Activated CD8-positive, alpha-beta T cell treated with anti-CD3 and anti-CD28 coated beads, Interleukin-2, amount 10 ng/mL, durations not matched to agents 7 days and 5 days (primary cell): ENCODE measurements at regions of chr12 and their contacts with region 1.

Region 1: DNA sequence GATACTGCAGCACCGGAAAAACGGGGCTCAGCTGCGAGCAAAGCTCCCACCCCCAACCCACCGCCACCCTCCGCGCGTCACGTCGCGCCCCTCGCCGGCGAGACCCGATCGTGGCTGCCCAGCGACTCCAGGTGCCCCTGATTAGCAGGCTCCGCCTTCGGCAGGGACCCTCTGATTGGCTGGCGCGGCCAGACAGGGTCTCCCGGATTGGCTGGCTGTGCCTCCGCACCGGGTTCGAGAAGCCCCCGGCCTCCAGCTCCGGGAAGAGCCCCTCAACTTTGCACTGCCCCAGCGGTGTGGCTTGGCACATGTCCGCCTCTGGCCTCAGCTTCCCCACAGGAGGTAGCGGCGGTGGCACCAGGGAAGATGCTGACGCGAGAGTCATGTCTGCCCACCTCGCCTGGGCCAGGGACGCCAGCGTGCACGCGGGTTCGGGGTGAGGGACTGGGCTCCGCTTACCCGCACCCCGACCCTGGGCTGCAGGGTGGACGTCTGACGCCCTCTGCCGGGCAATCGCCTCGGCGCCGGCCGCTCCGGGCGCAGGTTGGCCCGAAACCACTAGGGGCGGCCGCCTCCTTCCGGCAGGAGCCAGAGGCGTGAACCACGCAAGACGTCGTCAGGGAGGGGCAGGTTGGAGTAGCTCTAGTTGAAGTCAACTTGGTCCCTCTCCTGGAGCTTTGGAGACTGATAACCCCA is 498 bp upstream of the RHOF start:
- DNase-seq: peak; percentile 96
- ATAC-seq: peak; percentile 64
- H3K4me3 Mint-ChIP-seq: peak overlapping the region; percentile 94
- H3K27ac Mint-ChIP-seq: peak overlapping the region; percentile 95
- H3K4me1 Mint-ChIP-seq: peaks cover 60% of the 10 kb centered on the region
- H3K27me3 Mint-ChIP-seq: no peaks in the 10 kb centered on the region

Region 2: DNA sequence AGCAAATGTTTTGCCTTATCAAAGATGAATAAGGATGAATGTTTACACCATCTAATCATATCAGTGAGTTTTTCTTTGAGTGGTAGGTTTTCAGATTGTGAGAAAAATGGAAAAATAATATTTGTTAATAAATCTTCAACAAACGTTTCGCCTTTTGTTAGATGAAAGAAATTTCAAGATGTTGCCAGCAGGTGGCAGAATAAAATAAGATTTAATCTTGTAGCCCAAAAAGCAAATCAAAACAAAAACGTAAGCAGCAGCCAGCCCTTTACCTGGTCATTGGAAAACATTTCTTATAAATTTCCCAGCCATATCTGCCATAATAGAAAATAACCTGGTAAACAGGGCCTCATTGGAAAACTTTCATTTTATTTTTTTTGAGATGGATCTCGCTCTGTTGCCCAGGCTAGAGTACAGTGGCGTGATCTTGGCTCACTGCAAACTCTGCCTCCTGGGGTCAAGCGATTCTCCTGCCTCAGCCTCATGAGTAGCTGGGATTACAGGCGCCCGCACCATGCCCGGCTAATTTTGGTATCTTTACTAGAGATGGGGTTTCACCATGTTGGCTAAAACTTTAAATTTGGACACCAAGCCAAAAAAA is 96.8 kb before region 1 on chr12:
- CTCF ChIA-PET with region 1: interaction called, 36 read pairs
- POLR2A ChIA-PET with region 1: no interaction called
- DNase-seq: peak; percentile 62
- ATAC-seq: no peak
- H3K4me3 Mint-ChIP-seq: no peak overlapping the region
- H3K27ac Mint-ChIP-seq: no peak overlapping the region
- H3K4me1 Mint-ChIP-seq: peaks cover 4% of the 10 kb centered on the region
- H3K27me3 Mint-ChIP-seq: peaks cover 9% of the 10 kb centered on the region

Region 3: DNA sequence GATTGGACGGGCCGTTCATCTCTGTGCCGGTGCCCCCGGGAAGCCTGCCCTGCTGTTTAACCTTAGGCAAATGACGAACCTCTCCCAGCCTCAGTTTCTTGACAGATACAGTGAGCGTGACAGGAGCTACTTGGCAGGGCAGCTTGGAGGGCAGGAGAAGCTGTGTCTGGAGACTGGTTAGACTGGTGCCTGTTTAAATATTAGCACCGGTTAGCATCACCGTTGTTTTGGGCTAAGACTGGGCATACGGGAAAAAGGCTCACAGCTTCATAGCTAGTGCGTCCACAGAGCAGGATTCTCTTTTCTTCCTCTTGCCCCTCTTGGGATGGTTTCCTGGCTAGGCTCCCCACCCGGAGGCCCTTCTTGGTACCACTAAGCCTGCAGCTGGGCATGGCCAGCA is 39.1 kb before region 1 on chr12:
- CTCF ChIA-PET with region 1: interaction called, 27 read pairs
- POLR2A ChIA-PET with region 1: no interaction called
- DNase-seq: no peak
- ATAC-seq: no peak
- H3K4me3 Mint-ChIP-seq: no peak overlapping the region
- H3K27ac Mint-ChIP-seq: no peak overlapping the region
- H3K4me1 Mint-ChIP-seq: peaks cover 23% of the 10 kb centered on the region
- H3K27me3 Mint-ChIP-seq: no peaks in the 10 kb centered on the region

Region 4: GRCh38 chr12:121811434-121812319 is 17.7 kb after region 1 on chr12:
- CTCF ChIA-PET with region 1: interaction called, 956 read pairs
- POLR2A ChIA-PET with region 1: interaction called, 543 read pairs
- DNase-seq: peak; percentile 71
- ATAC-seq: peak; percentile 83
- H3K4me3 Mint-ChIP-seq: peak overlapping the region; percentile 65
- H3K27ac Mint-ChIP-seq: peak overlapping the region; percentile 62
- H3K4me1 Mint-ChIP-seq: peaks cover 52% of the 10 kb centered on the region
- H3K27me3 Mint-ChIP-seq: no peaks in the 10 kb centered on the region

Region 5: DNA sequence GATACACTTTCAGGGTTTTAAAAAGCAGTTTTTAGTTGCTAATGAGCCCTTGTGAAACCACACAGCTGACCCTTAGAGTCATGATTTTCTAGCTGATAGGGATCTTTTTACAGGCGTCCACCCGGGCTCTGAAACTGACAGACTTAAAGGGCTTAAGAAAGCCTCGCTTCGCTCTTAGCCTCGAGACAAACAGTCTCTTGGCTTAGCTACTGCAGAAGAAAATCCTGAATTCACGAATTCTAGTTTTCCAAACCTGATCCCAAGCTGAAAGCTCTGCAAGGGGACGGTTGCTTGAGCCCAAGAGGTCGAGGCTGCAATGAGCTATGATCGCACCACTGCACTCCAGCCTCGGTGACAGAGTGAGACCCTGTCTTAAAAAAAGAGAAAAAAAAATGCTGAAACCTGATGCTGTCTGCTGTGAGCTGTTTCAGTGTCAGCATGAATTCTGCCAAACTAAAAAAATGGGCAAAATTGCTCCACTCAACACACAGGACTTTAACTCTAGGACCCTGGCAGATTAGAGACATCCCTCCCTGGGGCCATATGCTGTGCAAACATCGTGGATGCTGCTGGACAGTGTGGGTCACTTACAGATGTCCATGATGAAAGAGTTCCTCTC is 67.8 kb after region 1 on chr12:
- CTCF ChIA-PET with region 1: interaction called, 11 read pairs
- POLR2A ChIA-PET with region 1: no interaction called
- DNase-seq: no peak
- ATAC-seq: no peak
- H3K4me3 Mint-ChIP-seq: no peak overlapping the region
- H3K27ac Mint-ChIP-seq: no peak overlapping the region
- H3K4me1 Mint-ChIP-seq: no peaks in the 10 kb centered on the region
- H3K27me3 Mint-ChIP-seq: no peaks in the 10 kb centered on the region